ENCODE measurements at regions of chr12 and their contacts with region 1.

Region 1: DNA sequence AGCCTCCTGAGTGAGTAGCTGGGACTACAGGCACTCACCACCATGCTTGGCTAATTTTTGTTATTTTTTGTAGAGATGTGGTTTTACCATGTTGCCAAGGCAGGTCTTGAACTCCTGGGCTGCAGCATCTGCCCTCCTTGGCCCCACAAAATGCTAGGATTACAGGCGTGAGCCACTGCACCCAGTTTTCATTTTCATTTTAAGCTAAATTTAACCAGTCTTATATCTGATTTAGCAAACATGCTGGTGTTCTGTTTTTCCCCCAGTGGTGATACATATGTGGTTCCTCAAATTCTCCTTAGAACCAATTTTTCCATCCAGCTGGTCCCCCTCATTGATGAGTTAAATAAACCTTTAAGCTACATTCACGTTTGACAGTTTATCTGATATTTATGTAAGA is 43.8 kb upstream of the BICD1 start:
- DNase-seq: no peak
- ATAC-seq: no peak
- H3K4me3 ChIP-seq: no peak overlapping the region
- H3K4me3 Mint-ChIP-seq: no peak overlapping the region
- H3K27ac ChIP-seq: no peak overlapping the region
- H3K27ac Mint-ChIP-seq: no peak overlapping the region
- H3K4me1 ChIP-seq: peaks cover 8% of the 10 kb centered on the region
- H3K4me1 Mint-ChIP-seq: peaks cover 17% of the 10 kb centered on the region
- H3K27me3 ChIP-seq: no peaks in the 10 kb centered on the region
- H3K27me3 Mint-ChIP-seq: no peaks in the 10 kb centered on the region
- CTCF ChIP-seq: no peak

Region 2: DNA sequence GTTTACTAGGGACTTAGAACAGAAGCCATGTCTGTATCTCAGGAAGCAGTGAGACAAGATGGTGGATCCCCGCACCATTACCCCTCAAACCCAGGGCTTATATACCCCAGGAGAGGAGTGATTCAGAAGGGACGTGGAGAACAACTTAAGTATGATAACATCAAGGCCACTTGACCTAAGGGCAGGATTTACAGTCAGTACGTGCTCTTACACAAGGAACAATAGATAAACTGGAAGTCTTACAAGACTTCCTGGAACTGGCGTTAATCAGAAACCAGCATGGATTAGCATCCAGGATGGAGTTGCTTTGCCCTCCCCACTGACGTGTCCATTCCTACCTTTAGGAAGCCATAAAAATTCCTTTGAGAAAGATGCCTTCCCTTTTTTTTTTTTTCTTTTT is 412.0 kb before region 1 on chr12:
- CTCF ChIA-PET with region 1: interaction called, 11 read pairs
- POLR2A ChIA-PET with region 1: no interaction called
- intact Hi-C with region 1: loop called (anchors 5 kb)
- DNase-seq: no peak
- ATAC-seq: no peak
- H3K4me3 ChIP-seq: no peak overlapping the region
- H3K4me3 Mint-ChIP-seq: no peak overlapping the region
- H3K27ac ChIP-seq: no peak overlapping the region
- H3K27ac Mint-ChIP-seq: no peak overlapping the region
- H3K4me1 ChIP-seq: peaks cover 10% of the 10 kb centered on the region
- H3K4me1 Mint-ChIP-seq: peaks cover 7% of the 10 kb centered on the region
- H3K27me3 ChIP-seq: no peaks in the 10 kb centered on the region
- H3K27me3 Mint-ChIP-seq: no peaks in the 10 kb centered on the region
- CTCF ChIP-seq: no peak

Region 3: DNA sequence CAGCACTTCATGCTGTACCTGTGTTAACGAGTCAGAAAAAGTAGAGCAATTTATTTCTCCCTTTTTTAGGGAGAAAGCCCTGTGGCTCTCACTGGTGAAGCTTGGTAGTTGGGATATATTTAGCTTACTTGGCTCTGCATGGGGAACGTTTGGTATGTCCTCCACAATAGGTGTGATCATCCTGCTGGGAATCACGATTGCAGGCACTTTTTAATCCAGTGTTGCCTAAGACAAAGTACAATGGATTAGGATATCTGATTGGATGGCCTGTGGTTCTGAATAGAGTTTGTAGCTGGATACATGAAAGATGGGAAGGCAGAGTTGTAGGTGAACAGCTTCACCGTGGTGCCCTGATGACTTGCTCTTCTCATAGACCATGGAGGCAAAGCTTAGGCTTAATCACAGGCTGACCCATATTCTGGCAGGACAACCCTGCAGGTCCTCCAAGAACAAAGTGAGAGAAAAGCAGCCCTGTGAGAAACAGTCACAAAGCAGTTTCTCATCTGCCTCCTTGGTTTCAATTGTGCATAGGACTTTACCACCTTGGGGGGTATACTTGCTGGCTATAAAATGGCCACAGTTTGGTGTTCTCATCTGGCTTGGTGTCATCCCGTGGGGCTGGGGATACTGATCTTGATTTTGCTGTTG is 96.2 kb before region 1 on chr12:
- CTCF ChIA-PET with region 1: interaction called, 4 read pairs
- POLR2A ChIA-PET with region 1: no interaction called
- intact Hi-C with region 1: loop called in 1 of 2 experiments (anchors 5 kb)
- DNase-seq: peak in 1 of 14 experiments; percentile 11
- ATAC-seq: no peak
- H3K4me3 ChIP-seq: peak overlapping the region; percentile 84
- H3K4me3 Mint-ChIP-seq: peak overlapping the region; percentile 99
- H3K27ac ChIP-seq: peak overlapping the region; percentile 1 to 46
- H3K27ac Mint-ChIP-seq: peak overlapping the region; percentile 96
- H3K4me1 ChIP-seq: peaks cover 66% of the 10 kb centered on the region
- H3K4me1 Mint-ChIP-seq: peaks cover 89% of the 10 kb centered on the region
- H3K27me3 ChIP-seq: no peaks in the 10 kb centered on the region
- H3K27me3 Mint-ChIP-seq: no peaks in the 10 kb centered on the region
- CTCF ChIP-seq: no peak

Region 4: GRCh38 chr12:32021346-32021773 is 41.5 kb before region 1 on chr12:
- CTCF ChIA-PET with region 1: no interaction called
- POLR2A ChIA-PET with region 1: no interaction called
- intact Hi-C with region 1: no loop called
- DNase-seq: no peak
- ATAC-seq: no peak
- H3K4me3 ChIP-seq: no peak overlapping the region
- H3K4me3 Mint-ChIP-seq: no peak overlapping the region
- H3K27ac ChIP-seq: no peak overlapping the region
- H3K27ac Mint-ChIP-seq: no peak overlapping the region
- H3K4me1 ChIP-seq: peaks cover 12% of the 10 kb centered on the region
- H3K4me1 Mint-ChIP-seq: peaks cover 23% of the 10 kb centered on the region
- H3K27me3 ChIP-seq: no peaks in the 10 kb centered on the region
- H3K27me3 Mint-ChIP-seq: no peaks in the 10 kb centered on the region
- CTCF ChIP-seq: no peak

Region 5: DNA sequence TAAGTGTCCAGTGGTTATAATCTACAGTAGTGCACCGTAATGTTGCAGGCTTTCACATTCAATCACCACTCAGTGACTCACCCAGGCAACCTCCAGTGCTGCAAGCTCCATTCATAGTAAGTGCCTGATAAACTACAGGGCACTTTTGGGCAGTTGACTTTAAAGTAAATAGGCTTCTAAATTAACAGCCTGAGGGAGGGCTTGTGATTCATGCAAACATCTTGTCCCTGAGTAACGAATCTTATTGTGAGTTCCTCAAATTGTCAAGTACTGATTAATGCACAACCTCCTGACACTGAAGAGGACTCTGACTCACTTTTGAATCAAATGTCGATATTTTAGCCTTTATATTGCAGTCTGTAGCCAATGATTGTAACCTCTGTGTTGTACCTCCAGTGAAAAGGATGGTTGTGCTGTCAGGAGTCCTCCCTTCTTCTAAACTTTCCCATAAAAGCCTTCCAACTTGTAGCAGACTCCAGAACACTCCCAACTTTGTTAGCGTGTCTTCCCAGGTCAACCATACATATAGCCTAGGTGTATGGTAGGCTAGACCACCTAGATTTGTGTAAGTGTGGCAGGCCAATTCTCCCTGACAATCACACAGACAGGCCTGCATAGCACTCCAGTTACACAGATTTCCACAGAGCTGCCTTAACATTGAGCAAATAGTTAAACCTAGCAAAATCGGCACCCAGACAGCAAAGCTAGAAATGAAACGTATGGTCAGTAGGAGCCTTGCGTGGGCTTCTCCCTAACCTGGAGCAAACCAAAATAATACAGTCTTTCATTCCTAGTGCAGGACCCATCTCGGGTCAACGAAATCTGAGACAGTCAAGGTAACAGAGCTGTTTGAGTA is 11.1 kb before region 1 on chr12:
- CTCF ChIA-PET with region 1: interaction called, 10 read pairs
- POLR2A ChIA-PET with region 1: no interaction called
- intact Hi-C with region 1: loop called in 1 of 2 experiments (anchors 1 kb)
- DNase-seq: peak in 2 of 14 experiments; percentile 23 to 39
- ATAC-seq: no peak
- H3K4me3 ChIP-seq: no peak overlapping the region
- H3K4me3 Mint-ChIP-seq: no peak overlapping the region
- H3K27ac ChIP-seq: no peak overlapping the region
- H3K27ac Mint-ChIP-seq: no peak overlapping the region
- H3K4me1 ChIP-seq: peaks cover 3% of the 10 kb centered on the region
- H3K4me1 Mint-ChIP-seq: peaks cover 7% of the 10 kb centered on the region
- H3K27me3 ChIP-seq: no peaks in the 10 kb centered on the region
- H3K27me3 Mint-ChIP-seq: no peaks in the 10 kb centered on the region
- CTCF ChIP-seq: no peak

Region 6: GRCh38 chr12:32302218-32303173 is 239.6 kb after region 1 on chr12:
- CTCF ChIA-PET with region 1: interaction called, 3 read pairs
- POLR2A ChIA-PET with region 1: no interaction called
- intact Hi-C with region 1: loop called (anchors 2 kb)
- DNase-seq: peak in 5 of 14 experiments; percentile 3 to 51 (median 11)
- ATAC-seq: no peak
- H3K4me3 ChIP-seq: no peak overlapping the region
- H3K4me3 Mint-ChIP-seq: no peak overlapping the region
- H3K27ac ChIP-seq: no peak overlapping the region
- H3K27ac Mint-ChIP-seq: no peak overlapping the region
- H3K4me1 ChIP-seq: no peaks in the 10 kb centered on the region
- H3K4me1 Mint-ChIP-seq: peaks cover 10% of the 10 kb centered on the region
- H3K27me3 ChIP-seq: no peaks in the 10 kb centered on the region
- H3K27me3 Mint-ChIP-seq: no peaks in the 10 kb centered on the region
- CTCF ChIP-seq: peak; percentile 31

Region 7: DNA sequence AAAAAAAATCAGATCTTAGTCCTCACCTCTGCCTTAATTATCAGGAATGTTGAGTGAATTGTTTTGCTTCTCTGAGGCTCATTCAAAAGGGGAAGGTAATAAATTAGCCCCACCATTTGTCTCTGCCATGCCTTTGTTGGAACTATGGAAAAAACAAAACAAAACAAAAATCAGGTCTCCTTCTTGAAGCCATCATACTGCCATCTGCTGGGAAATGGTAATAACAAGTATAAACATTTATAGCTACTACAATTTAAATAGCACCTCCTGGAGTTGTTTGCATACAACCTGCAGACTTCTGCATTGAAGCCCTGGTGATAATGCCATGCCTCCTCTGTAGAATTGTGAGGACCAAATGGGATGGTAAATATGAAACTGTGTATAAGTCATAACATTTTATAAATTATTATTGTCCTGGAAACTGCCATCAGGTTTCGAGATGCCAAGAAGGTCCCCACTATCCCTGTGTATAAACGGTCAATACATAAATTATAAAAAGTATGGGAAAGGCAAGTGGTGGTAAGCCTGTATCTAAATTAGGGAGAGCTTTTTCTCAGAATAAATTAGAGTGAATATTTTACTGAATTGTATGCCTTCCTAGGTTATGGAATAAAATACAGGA is 249.3 kb after region 1 on chr12:
- CTCF ChIA-PET with region 1: interaction called, 10 read pairs
- POLR2A ChIA-PET with region 1: no interaction called
- intact Hi-C with region 1: loop called in 1 of 2 experiments (anchors 2 kb)
- DNase-seq: peak in 4 of 14 experiments; percentile 4 to 69 (median 64)
- ATAC-seq: peak; percentile 55
- H3K4me3 ChIP-seq: no peak overlapping the region
- H3K4me3 Mint-ChIP-seq: no peak overlapping the region
- H3K27ac ChIP-seq: no peak overlapping the region
- H3K27ac Mint-ChIP-seq: no peak overlapping the region
- H3K4me1 ChIP-seq: no peaks in the 10 kb centered on the region
- H3K4me1 Mint-ChIP-seq: peaks cover 6% of the 10 kb centered on the region
- H3K27me3 ChIP-seq: no peaks in the 10 kb centered on the region
- H3K27me3 Mint-ChIP-seq: no peaks in the 10 kb centered on the region
- CTCF ChIP-seq: peak; percentile 78